HepG2 (cell line): ENCODE measurements at regions of chr19 and their contacts with region 1.

Region 1: GRCh38 chr19:47296036-47296435 is 13.6 kb upstream of the C5AR1 start:
- DNase-seq: peak; percentile 76
- ATAC-seq: peak; percentile 89
- H3K4me3 ChIP-seq: no peak overlapping the region
- H3K27ac ChIP-seq: no peak overlapping the region
- H3K4me1 ChIP-seq: no peaks in the 10 kb centered on the region
- H3K27me3 ChIP-seq: no peaks in the 10 kb centered on the region
- CTCF ChIP-seq: peak; percentile 88
- EP300 ChIP-seq: no peak
- POLR2A ChIP-seq: no peak
- RAD21 ChIP-seq: peak; percentile 84

Region 2: GRCh38 chr19:47391510-47392223 is 95.6 kb after region 1 on chr19:
- CTCF ChIA-PET with region 1: interaction called, 37 read pairs
- POLR2A ChIA-PET with region 1: no interaction called
- in situ Hi-C with region 1: loop called (anchors 5 kb)
- intact Hi-C with region 1: loop called (anchors 1 kb)
- DNase-seq: peak; percentile 58
- ATAC-seq: peak; percentile 89
- H3K4me3 ChIP-seq: no peak overlapping the region
- H3K27ac ChIP-seq: no peak overlapping the region
- H3K4me1 ChIP-seq: no peaks in the 10 kb centered on the region
- H3K27me3 ChIP-seq: peaks cover 0 to 13% of the 10 kb centered on the region in 2 experiments; a peak in 2 of 5 replicates
- CTCF ChIP-seq: peak; percentile 84
- EP300 ChIP-seq: no peak
- POLR2A ChIP-seq: no peak
- RAD21 ChIP-seq: peak; percentile 70

Region 3: DNA sequence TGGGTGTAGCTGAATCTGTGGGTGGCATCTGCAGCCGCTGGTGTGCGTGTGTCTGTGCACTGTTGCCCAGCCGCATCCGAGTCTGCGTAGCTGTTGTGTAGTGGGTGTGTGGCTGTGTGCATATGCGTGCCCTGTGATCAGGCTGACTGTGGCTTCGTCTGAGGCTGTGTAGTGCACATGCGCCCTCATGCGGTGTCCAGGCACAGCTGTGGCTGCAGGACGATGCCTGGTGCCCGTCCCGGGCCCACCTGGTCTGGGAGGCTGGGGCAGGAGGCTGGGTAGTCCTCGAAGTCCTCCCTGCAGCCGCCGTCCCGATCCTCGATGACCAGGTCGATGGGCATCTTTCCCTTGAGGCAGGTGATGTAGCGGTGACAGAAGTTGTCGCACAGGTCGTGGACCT is 118.4 kb after region 1 on chr19:
- CTCF ChIA-PET with region 1: no interaction called
- POLR2A ChIA-PET with region 1: no interaction called
- in situ Hi-C with region 1: loop called (anchors 10 kb)
- intact Hi-C with region 1: loop called (anchors 2 kb)
- DNase-seq: peak; percentile 57
- ATAC-seq: peak; percentile 88
- H3K4me3 ChIP-seq: no peak overlapping the region
- H3K27ac ChIP-seq: no peak overlapping the region
- H3K4me1 ChIP-seq: peaks cover 5% of the 10 kb centered on the region; the same call in 1 of the 2 replicates
- H3K27me3 ChIP-seq: peaks cover 0 to 62% of the 10 kb centered on the region in 2 experiments; a peak in 4 of 5 replicates
- CTCF ChIP-seq: peak; percentile 85
- EP300 ChIP-seq: no peak
- POLR2A ChIP-seq: no peak
- RAD21 ChIP-seq: peak; percentile 72